Spleen (tissue), 13 donors: ENCODE measurements at regions of chr5 and their contacts with region 1.

Region 1: DNA sequence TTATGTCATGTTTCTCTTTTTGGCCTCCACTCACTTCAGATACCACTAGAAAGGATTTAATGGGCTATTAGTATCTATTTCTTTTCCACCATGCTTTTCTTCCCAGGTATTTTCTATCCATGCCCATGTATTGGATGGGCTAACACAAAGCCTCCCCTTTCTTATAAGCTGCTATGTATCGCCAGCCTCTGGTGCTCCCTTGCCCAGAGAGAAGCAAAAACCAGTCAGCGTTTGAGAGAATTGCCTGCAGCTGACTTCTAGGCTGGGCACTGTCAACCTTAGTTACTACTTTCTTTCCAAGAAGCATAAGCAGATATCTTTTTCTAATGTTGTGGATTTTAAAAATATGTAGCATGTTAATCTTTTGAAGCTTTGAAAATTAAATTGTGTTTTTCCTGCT is 30.2 kb upstream of the HSPB3 start:
- DNase-seq: no peak
- H3K4me3 ChIP-seq: no peak overlapping the region
- H3K27ac ChIP-seq: no peak overlapping the region
- H3K4me1 ChIP-seq: no peaks in the 10 kb centered on the region
- H3K27me3 ChIP-seq: peaks cover 0 to 4% (median 0%) of the 10 kb centered on the region in 7 donors
- CTCF ChIP-seq: no peak
- POLR2A ChIP-seq: no peak

Region 2: DNA sequence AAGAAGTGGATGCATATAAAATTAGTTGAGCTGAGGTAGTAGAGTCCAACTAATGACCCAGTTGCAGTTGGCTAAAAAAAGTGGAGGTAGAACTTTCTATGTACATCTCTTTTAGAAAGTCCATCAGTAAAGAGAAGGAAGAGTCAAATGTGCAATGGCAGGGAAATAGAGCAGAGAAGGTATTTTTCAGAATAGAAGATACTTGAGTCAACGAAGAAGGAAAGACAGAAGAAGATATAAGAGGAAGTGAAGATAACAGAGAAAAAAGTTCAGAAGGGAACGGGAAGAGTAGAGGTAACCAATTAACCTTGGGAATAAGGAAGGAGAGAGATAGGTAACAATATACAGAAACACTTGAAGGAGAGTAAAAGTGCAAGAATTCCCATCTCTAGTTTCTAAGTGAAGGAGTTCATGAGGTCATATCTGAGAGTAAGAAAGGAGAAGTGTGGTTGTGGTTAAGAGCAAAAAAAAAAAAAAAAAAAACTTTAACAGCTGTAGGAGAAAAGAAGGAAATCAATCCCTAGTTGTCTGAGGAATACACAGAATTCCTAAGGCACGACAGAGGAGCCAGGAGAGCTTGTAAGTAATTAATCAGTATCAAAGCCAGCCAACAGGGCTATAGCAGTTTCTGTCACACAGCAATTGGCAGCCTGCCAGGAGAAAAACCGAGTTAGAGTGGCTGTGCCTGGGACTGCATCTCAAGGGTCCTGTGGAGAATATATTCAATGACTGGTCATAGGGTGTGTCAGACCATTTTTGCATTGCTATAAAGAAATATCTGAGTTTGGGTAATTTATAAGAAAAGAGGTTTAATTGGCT is 175.8 kb before region 1 on chr5:
- intact Hi-C with region 1: loop called (anchors 5 kb)
- DNase-seq: no peak
- H3K4me3 ChIP-seq: no peak overlapping the region
- H3K27ac ChIP-seq: no peak overlapping the region
- H3K4me1 ChIP-seq: peaks cover 0 to 45% (median 22%) of the 10 kb centered on the region in 6 donors
- H3K27me3 ChIP-seq: no peaks in the 10 kb centered on the region
- CTCF ChIP-seq: no peak
- POLR2A ChIP-seq: no peak